ENCODE measurements at regions of chr3 and their contacts with region 1.

Region 1: GRCh38 chr3:73624821-73625665 is at the start of gene PDZRN3:
- DNase-seq: peak; percentile 58 to 79 (median 74)
- H3K4me3 ChIP-seq: peak within 1 kb of the TSS; percentile 7 to 70 (median 56)
- H3K27ac ChIP-seq: peak within 1 kb of the TSS; percentile 26 to 86 (median 72)
- H3K4me1 ChIP-seq: peaks cover 9 to 24% of the 10 kb centered on the region in 2 donors
- H3K27me3 ChIP-seq: no peaks in the 10 kb centered on the region
- CTCF ChIP-seq: peak in 1 of 6 experiments; percentile 28
- POLR2A ChIP-seq: peak in 1 of 2 donors; percentile 81
- total RNA-seq, gene PDZRN3: 11.5 to 126 (median 69.8) TPM

Region 2: DNA sequence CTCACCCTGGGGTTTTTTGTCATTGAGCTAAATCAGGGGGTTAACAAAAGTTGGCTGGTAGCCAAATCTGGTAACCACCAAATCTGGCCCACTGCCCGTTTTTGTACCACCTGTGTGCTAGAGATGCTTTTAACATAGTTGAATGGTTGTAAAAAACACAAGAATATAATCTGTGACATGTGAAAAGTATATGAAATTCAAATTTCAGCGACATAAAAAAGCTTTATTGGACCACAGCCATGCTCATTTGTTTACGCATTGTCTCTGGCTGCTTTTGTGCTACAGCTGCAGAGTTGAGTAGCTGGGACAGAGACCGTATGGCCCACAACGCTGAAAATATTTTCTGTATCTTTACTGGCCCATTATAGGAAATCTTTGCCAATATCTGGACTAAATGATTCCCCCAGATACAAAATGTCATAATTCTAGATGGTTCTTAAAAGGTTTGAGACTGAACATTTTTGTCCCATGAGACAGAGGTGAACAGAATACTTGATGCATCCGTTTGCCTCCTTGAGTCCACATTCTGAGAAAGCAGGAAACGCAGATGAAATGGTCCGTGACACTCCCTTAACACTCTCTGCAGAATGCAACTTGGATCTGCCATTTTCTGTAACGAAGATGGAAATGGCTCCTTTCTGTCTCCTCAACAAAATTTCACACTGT is 120.6 kb after region 1 on chr3:
- intact Hi-C with region 1: no loop called
- DNase-seq: no peak
- H3K4me3 ChIP-seq: no peak overlapping the region
- H3K27ac ChIP-seq: no peak overlapping the region
- H3K4me1 ChIP-seq: no peaks in the 10 kb centered on the region
- H3K27me3 ChIP-seq: no peaks in the 10 kb centered on the region
- CTCF ChIP-seq: no peak
- POLR2A ChIP-seq: no peak

Region 3: GRCh38 chr3:73848173-73848906 is 223.3 kb after region 1 on chr3:
- intact Hi-C with region 1: loop called in 1 of 2 experiments (anchors 5 kb)
- DNase-seq: peak in 2 of 7 donors; percentile 11 to 25
- H3K4me3 ChIP-seq: no peak overlapping the region
- H3K27ac ChIP-seq: no peak overlapping the region
- H3K4me1 ChIP-seq: no peaks in the 10 kb centered on the region
- H3K27me3 ChIP-seq: no peaks in the 10 kb centered on the region
- CTCF ChIP-seq: peak; percentile 38 to 76 (median 72)
- POLR2A ChIP-seq: no peak

Region 4: DNA sequence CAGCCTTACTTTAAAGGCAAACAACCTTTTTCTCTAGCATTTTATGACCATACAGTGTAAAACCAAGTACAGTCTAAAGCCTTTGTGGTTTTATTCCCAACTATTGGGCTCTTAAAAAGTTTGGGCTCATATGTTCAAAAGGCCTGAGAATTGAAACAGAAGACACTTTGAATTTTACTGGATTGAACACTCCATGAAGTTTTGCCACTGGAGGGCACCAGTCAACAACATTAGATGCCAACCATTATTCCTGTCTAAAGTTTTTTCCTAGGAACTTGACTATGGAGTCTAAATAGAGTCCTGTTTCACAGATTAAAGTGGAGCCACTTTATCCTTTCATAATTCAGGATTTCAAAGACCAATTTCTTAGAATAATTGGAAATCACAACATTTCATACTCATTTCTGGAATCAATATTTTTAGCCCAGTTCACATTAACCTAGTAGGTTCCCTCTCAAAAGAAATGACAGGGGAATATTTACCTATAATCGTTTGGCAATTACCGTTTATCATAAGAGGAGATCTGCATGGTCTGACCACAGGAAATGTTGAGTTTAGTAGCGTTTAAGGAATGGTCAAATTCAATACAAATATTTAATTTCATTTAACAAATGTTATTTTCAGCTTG is 243.8 kb after region 1 on chr3:
- intact Hi-C with region 1: no loop called
- DNase-seq: peak; percentile 23 to 81 (median 52)
- H3K4me3 ChIP-seq: no peak overlapping the region
- H3K27ac ChIP-seq: no peak overlapping the region
- H3K4me1 ChIP-seq: peaks cover 0 to 1% of the 10 kb centered on the region in 2 donors
- H3K27me3 ChIP-seq: no peaks in the 10 kb centered on the region
- CTCF ChIP-seq: peak; percentile 43 to 69 (median 64)
- POLR2A ChIP-seq: no peak

Measured in adrenal gland (tissue), 19 donors.